CD8-positive, alpha-beta T cell (primary cell): ENCODE measurements at regions of chr17 and their contacts with region 1.

Region 1: GRCh38 chr17:78360371-78361224 is 721 bp upstream of the SOCS3 start:
- DNase-seq: peak; percentile 79 to 95 (median 87)
- ATAC-seq: no peak
- H3K4me3 ChIP-seq: peak overlapping the region; percentile 56 to 64
- H3K4me3 Mint-ChIP-seq: peak overlapping the region; percentile 88
- H3K27ac ChIP-seq: peak overlapping the region; percentile 6 to 62
- H3K27ac Mint-ChIP-seq: peak overlapping the region; percentile 87
- H3K4me1 ChIP-seq: peaks cover 31% of the 10 kb centered on the region
- H3K4me1 Mint-ChIP-seq: peaks cover 43% of the 10 kb centered on the region
- H3K27me3 ChIP-seq: no peaks in the 10 kb centered on the region
- H3K27me3 Mint-ChIP-seq: no peaks in the 10 kb centered on the region
- CTCF ChIP-seq: peak; percentile 84

Region 2: GRCh38 chr17:78272181-78272913 is 88.3 kb before region 1 on chr17:
- CTCF ChIA-PET with region 1: no interaction called
- POLR2A ChIA-PET with region 1: no interaction called
- intact Hi-C with region 1: loop called in 1 of 2 experiments (anchors 5 kb)
- DNase-seq: peak in 6 of 9 experiments; percentile 34 to 89 (median 67)
- ATAC-seq: peak; percentile 90
- H3K4me3 ChIP-seq: no peak overlapping the region
- H3K4me3 Mint-ChIP-seq: peak overlapping the region; percentile 42
- H3K27ac ChIP-seq: peak overlapping the region in 1 of 2 experiments; percentile 3
- H3K27ac Mint-ChIP-seq: peak overlapping the region; percentile 93
- H3K4me1 ChIP-seq: peaks cover 42% of the 10 kb centered on the region
- H3K4me1 Mint-ChIP-seq: peaks cover 37% of the 10 kb centered on the region
- H3K27me3 ChIP-seq: peaks cover 0 to 3% of the 10 kb centered on the region in 2 experiments
- H3K27me3 Mint-ChIP-seq: no peaks in the 10 kb centered on the region
- CTCF ChIP-seq: no peak

Region 3: DNA sequence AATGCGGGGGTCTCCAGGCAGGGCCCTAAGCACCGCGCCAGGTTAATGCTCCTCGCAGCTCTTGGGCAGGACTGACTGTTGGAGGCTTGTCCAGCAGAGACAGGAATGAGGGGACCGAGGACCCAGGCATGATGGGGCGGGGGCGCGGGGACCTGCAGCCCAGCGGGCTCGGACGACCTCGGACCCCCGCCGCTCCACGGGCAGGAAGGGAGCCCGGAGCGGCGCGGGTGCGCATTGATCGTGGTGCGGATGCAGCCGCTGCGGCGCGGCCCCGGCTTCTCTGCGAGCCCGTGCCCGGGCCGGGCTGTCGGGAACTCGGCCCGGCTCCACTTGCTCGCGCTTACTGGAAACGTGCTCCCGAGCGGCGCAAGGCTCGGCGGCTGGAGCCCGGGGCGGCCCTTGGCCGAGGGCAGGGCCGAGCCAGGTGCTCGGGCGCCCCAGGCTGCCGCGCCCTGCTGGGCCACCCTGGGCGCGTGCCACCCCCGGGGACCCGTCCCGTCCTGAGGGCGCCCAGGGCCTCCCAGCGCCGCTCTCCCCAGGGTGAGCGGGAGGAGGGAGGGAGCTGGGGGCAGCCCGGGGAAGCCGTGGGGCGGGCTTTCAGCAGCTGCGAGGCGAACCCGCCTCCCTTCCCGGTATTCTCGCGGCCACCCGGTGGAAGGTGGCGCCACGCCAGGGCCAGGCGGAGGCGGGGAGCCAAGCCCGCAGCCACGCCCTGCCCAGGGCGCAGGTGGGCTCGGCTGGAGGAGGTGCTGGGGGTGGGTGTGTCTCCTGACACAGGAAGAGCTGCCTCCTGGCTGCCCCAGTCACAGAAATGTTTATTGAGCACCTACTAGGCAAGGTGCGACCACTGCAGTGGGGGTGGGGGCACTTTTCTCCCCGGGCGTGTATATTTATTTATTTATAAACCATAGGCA is 46.6 kb before region 1 on chr17:
- CTCF ChIA-PET with region 1: interaction called, 8 read pairs
- POLR2A ChIA-PET with region 1: interaction called, 4 read pairs
- intact Hi-C with region 1: loop called (anchors 1 to 2 kb)
- DNase-seq: peak; percentile 36 to 82 (median 73)
- ATAC-seq: peak; percentile 82
- H3K4me3 ChIP-seq: peak overlapping the region; percentile 18 to 57
- H3K4me3 Mint-ChIP-seq: peak overlapping the region; percentile 73
- H3K27ac ChIP-seq: no peak overlapping the region
- H3K27ac Mint-ChIP-seq: peak overlapping the region; percentile 64
- H3K4me1 ChIP-seq: peaks cover 39% of the 10 kb centered on the region
- H3K4me1 Mint-ChIP-seq: peaks cover 39% of the 10 kb centered on the region
- H3K27me3 ChIP-seq: peaks cover 0 to 2% of the 10 kb centered on the region in 2 experiments
- H3K27me3 Mint-ChIP-seq: no peaks in the 10 kb centered on the region
- CTCF ChIP-seq: no peak

Region 4: DNA sequence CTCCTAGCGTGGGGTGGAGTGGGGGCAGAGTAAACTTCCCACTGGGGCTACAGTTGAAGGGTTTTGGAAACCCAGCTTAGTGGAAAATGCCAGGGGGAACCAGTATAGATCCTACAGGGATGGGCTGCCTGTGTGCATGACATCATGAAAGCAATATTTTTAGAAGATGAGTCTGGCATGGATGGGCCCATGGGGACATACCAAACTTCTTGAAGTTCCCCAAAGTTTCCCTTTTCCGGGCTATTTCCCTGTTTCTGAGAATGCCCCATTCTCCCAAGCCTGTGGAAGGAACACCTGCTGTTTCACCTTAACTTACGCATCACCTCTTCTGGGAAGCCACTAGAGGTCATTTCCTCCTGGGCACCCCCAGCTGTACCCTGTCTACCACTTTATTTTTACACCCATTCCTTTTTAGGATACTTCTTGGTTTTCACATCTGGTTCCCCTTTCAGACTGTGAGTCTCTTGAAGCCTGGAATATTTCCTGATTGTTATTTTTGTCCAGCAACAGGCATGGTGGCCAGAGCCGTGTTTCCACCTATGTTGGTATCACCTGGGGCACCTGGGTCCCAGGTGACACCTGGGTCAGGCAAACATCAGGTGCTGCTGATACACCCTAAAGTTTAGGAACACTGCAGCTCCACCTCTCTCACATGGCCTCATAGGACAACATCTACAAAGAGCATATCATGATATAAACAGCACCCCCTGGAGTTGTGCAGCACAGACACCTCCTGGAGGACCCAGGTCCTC is 10.5 kb before region 1 on chr17:
- CTCF ChIA-PET with region 1: interaction called, 52 read pairs
- POLR2A ChIA-PET with region 1: interaction called, 19 read pairs
- intact Hi-C with region 1: no loop called
- DNase-seq: no peak
- ATAC-seq: no peak
- H3K4me3 ChIP-seq: no peak overlapping the region
- H3K4me3 Mint-ChIP-seq: no peak overlapping the region
- H3K27ac ChIP-seq: no peak overlapping the region
- H3K27ac Mint-ChIP-seq: no peak overlapping the region
- H3K4me1 ChIP-seq: peaks cover 67% of the 10 kb centered on the region
- H3K4me1 Mint-ChIP-seq: peaks cover 68% of the 10 kb centered on the region
- H3K27me3 ChIP-seq: no peaks in the 10 kb centered on the region
- H3K27me3 Mint-ChIP-seq: no peaks in the 10 kb centered on the region
- CTCF ChIP-seq: no peak

Region 5: GRCh38 chr17:78421484-78422266 is 61.1 kb after region 1 on chr17:
- CTCF ChIA-PET with region 1: interaction called, 58 read pairs
- POLR2A ChIA-PET with region 1: no interaction called
- intact Hi-C with region 1: loop called (anchors 1 kb)
- DNase-seq: peak; percentile 59 to 82 (median 75)
- ATAC-seq: peak; percentile 97
- H3K4me3 ChIP-seq: no peak overlapping the region
- H3K4me3 Mint-ChIP-seq: no peak overlapping the region
- H3K27ac ChIP-seq: no peak overlapping the region
- H3K27ac Mint-ChIP-seq: no peak overlapping the region
- H3K4me1 ChIP-seq: peaks cover 5% of the 10 kb centered on the region
- H3K4me1 Mint-ChIP-seq: peaks cover 11% of the 10 kb centered on the region
- H3K27me3 ChIP-seq: no peaks in the 10 kb centered on the region
- H3K27me3 Mint-ChIP-seq: no peaks in the 10 kb centered on the region
- CTCF ChIP-seq: peak; percentile 99

Region 6: GRCh38 chr17:78517421-78517820 is 156.8 kb after region 1 on chr17:
- CTCF ChIA-PET with region 1: no interaction called
- POLR2A ChIA-PET with region 1: no interaction called
- intact Hi-C with region 1: no loop called
- DNase-seq: no peak
- ATAC-seq: no peak
- H3K4me3 ChIP-seq: no peak overlapping the region
- H3K4me3 Mint-ChIP-seq: no peak overlapping the region
- H3K27ac ChIP-seq: no peak overlapping the region
- H3K27ac Mint-ChIP-seq: no peak overlapping the region
- H3K4me1 ChIP-seq: no peaks in the 10 kb centered on the region
- H3K4me1 Mint-ChIP-seq: no peaks in the 10 kb centered on the region
- H3K27me3 ChIP-seq: no peaks in the 10 kb centered on the region
- H3K27me3 Mint-ChIP-seq: no peaks in the 10 kb centered on the region
- CTCF ChIP-seq: no peak